Right lobe of liver (tissue), 6 donors: ENCODE measurements at regions of chr16 and their contacts with region 1.

Region 1: DNA sequence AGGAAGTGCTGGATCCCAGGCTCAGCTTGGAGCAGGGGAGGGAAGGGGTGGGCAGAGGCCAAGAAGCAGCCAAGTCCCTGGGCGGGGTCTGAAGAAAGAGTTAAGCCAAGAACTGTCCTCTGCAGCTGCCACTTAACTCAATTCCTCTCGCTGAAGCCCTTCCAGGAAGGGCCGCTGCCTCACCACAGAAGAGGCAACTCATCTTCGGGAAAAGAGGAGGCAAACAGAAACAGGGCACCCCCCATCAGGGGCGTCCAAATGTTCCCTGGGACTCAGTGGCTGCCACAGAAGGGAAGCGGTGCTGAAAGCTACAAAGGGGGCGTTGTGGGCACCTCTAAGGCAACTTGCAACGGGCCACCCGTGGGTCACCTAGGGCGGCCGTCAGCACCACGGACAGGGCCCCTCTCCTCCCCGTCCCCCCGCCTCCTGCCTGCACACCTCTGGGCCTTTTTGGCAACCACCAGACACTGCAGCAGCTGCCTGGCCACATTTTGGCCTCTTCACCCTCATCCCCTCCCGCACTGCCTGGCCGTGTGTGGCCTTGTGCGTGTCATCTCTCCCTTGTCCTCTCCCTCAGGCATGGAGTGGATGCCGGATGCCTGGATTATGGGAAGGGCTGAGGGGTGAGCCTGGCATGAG is 2.5 kb downstream of the TLCD3B start:
- DNase-seq: no peak
- ATAC-seq: peak in 2 of 4 donors; percentile 30 to 37
- H3K4me3 ChIP-seq: no peak overlapping the region
- H3K27ac ChIP-seq: no peak overlapping the region
- H3K4me1 ChIP-seq: no peaks in the 10 kb centered on the region
- H3K27me3 ChIP-seq: no peaks in the 10 kb centered on the region
- CTCF ChIP-seq: no peak
- POLR2A ChIP-seq: no peak

Region 2: GRCh38 chr16:29694384-29695195 is 334.0 kb before region 1 on chr16:
- intact Hi-C with region 1: loop called in 1 of 2 experiments (anchors 10 kb)
- DNase-seq: peak; percentile 67 to 88 (median 86)
- ATAC-seq: peak; percentile 76 to 92 (median 83)
- H3K4me3 ChIP-seq: peak overlapping the region in 1 of 3 donors; percentile 10
- H3K27ac ChIP-seq: peak overlapping the region in 2 of 3 donors; percentile 65 to 70
- H3K4me1 ChIP-seq: peaks cover 0 to 23% (median 0%) of the 10 kb centered on the region in 4 donors
- H3K27me3 ChIP-seq: no peaks in the 10 kb centered on the region
- CTCF ChIP-seq: no peak
- POLR2A ChIP-seq: no peak

Region 3: DNA sequence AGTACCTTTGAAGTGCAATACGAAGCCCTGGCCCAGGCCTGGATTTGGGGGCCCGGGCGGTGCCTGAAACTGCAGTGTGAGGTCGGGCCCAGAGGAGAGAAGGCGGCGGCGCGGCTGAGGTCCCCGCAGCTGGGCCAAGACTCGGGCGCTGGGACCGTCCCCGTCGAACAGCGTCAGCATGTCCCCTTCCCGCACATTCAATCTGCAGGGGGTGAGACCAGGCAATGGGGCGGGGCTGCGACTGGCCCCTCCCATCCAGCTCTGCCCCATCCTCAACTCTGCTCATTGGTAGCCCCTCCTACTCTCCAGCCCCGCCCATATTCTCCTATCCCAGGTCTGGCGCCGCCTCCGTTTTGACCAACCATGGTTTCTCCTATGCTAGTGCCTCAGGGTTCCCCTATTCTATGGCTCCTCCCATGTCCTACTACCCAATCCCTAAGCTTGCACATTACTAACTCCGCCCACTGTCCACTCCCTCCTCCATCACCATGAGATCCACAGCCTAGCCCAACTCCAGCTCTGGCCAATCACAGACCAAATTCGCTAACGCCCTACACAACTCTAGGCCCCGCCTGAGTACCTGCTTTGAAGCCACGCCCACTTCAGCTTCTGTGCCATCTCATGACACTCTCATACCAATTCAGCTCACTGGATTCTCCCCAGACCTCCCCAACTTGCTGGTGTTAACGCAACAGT is 151.1 kb before region 1 on chr16:
- intact Hi-C with region 1: loop called in 1 of 2 experiments (anchors 10 kb)
- DNase-seq: no peak
- ATAC-seq: peak in 3 of 4 donors; percentile 38 to 58 (median 40)
- H3K4me3 ChIP-seq: no peak overlapping the region
- H3K27ac ChIP-seq: no peak overlapping the region
- H3K4me1 ChIP-seq: no peaks in the 10 kb centered on the region
- H3K27me3 ChIP-seq: peaks cover 0 to 7% of the 10 kb centered on the region in 2 donors
- CTCF ChIP-seq: no peak
- POLR2A ChIP-seq: no peak